Left ventricle myocardium superior (tissue), 1 donor: ENCODE measurements at regions of chr2 and their contacts with region 1.

Region 1: GRCh38 chr2:174771631-174772471 is 7.6 kb upstream of the CHRNA1 start:
- DNase-seq: peak; percentile 86
- ATAC-seq: peak; percentile 98

Region 2: DNA sequence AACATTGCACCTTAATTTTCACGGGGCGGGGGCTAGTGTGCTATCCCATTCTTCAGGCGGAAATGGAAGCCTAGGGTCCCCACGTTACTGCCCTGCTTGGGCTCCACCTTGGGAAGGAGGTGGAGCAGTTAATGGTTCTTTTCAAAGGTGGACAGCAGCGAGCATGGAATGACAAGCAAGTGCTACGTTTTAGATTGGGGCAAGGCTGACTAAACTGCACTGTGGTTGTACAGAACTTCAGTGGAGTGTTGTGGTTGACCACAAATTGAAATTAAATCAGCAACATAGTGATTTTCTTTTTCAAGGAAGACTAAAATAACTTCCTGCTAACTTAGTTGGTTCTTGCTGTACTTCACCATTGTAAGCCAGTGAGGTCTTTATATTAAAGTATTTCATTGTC is 54.6 kb before region 1 on chr2:
- intact Hi-C with region 1: no loop called
- DNase-seq: no peak
- ATAC-seq: no peak

Region 3: GRCh38 chr2:174939046-174939445 is 167.2 kb after region 1 on chr2:
- intact Hi-C with region 1: no loop called
- DNase-seq: no peak
- ATAC-seq: no peak

Region 4: GRCh38 chr2:174985630-174986029 is 213.8 kb after region 1 on chr2:
- intact Hi-C with region 1: loop called (anchors 2 kb)
- DNase-seq: no peak
- ATAC-seq: no peak

Region 5: DNA sequence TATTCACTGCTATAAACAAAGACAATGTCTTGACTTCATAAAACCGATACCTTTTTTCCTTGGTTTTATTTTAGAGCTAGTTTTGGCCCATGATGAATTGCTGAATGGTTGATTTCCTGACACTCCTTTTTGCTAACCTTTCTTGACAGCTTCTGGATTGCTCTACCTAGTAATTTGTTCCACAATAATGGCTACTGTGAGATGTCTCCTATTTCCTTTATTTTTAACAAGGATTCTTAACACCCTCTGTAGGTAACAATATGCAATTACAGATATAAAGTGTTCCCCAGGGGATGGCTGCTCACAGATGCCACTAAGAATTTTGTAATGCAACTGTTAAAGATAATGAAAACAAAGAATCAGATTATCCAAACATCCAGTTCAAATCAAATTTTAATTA is 510.4 kb after region 1 on chr2:
- intact Hi-C with region 1: no loop called
- DNase-seq: no peak
- ATAC-seq: peak; percentile 49

Region 6: DNA sequence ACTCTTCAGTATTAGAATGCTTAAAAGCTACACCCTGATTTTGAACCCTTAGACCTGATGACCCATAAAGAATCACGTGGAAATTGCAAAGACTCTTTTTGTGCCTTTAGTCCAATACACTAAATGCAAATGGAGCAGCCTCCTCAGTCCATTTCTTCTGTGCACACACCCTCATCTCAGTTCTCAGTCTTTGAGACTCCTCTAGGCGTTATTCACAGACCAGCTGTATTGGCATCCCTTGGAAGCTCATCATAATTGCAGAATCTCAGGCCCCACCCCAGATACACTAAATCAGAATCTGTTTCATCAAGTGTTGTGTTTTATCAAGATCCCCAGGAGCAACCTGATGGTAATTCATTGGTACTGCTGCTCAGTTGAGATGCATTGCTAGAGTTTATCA is 744.7 kb after region 1 on chr2:
- intact Hi-C with region 1: no loop called
- DNase-seq: no peak
- ATAC-seq: no peak